ENCODE measurements at regions of chr5 and their contacts with region 1.

Region 1: GRCh38 chr5:178732281-178732680 is 1.8 kb upstream of the ZNF354A start:
- DNase-seq: no peak
- ATAC-seq: no peak
- H3K4me3 ChIP-seq: no peak overlapping the region
- H3K4me3 Mint-ChIP-seq: peak overlapping the region; percentile 8
- H3K27ac ChIP-seq: no peak overlapping the region
- H3K27ac Mint-ChIP-seq: no peak overlapping the region
- H3K4me1 ChIP-seq: peaks cover 4% of the 10 kb centered on the region
- H3K4me1 Mint-ChIP-seq: peaks cover 14% of the 10 kb centered on the region
- H3K27me3 ChIP-seq: no peaks in the 10 kb centered on the region
- H3K27me3 Mint-ChIP-seq: no peaks in the 10 kb centered on the region
- CTCF ChIP-seq: no peak

Region 2: GRCh38 chr5:177412603-177413233 is 1319.6 kb before region 1 on chr5:
- CTCF ChIA-PET with region 1: no interaction called
- POLR2A ChIA-PET with region 1: no interaction called
- intact Hi-C with region 1: no loop called
- DNase-seq: peak in 2 of 9 experiments; percentile 64 to 81
- ATAC-seq: peak; percentile 55
- H3K4me3 ChIP-seq: peak overlapping the region in 1 of 2 experiments; percentile 32
- H3K4me3 Mint-ChIP-seq: peak overlapping the region; percentile 72
- H3K27ac ChIP-seq: peak overlapping the region in 1 of 2 experiments; percentile 75
- H3K27ac Mint-ChIP-seq: peak overlapping the region; percentile 79
- H3K4me1 ChIP-seq: peaks cover 17% of the 10 kb centered on the region
- H3K4me1 Mint-ChIP-seq: peaks cover 37% of the 10 kb centered on the region
- H3K27me3 ChIP-seq: no peaks in the 10 kb centered on the region
- H3K27me3 Mint-ChIP-seq: no peaks in the 10 kb centered on the region
- CTCF ChIP-seq: no peak

Region 3: DNA sequence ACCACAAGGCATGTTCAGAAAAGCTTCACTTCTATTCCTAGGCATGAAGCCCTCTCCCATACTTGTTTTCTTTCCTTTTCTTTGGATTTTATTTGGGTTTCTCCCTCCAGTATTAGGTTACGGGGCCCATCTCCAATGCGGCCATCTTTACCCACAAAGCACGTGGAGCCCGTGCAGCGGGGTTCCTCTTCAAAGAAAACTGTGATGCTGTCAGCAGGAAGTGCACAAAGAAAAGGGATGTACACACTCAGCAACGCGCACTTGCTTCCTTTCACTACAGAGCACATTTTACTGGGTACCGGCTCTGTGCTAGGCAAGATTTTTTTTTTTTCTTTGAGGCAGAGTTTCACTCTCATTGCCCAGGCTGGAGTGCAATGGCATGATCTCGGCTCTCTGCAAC is 248.7 kb before region 1 on chr5:
- CTCF ChIA-PET with region 1: no interaction called
- POLR2A ChIA-PET with region 1: no interaction called
- intact Hi-C with region 1: loop called in 1 of 2 experiments (anchors 5 kb)
- DNase-seq: peak; percentile 13 to 82 (median 56)
- ATAC-seq: peak; percentile 100
- H3K4me3 ChIP-seq: peak overlapping the region in 1 of 2 experiments; percentile 20
- H3K4me3 Mint-ChIP-seq: peak overlapping the region; percentile 76
- H3K27ac ChIP-seq: peak overlapping the region; percentile 36 to 56
- H3K27ac Mint-ChIP-seq: peak overlapping the region; percentile 91
- H3K4me1 ChIP-seq: peaks cover 11% of the 10 kb centered on the region
- H3K4me1 Mint-ChIP-seq: peaks cover 10% of the 10 kb centered on the region
- H3K27me3 ChIP-seq: no peaks in the 10 kb centered on the region
- H3K27me3 Mint-ChIP-seq: no peaks in the 10 kb centered on the region
- CTCF ChIP-seq: no peak

Region 4: DNA sequence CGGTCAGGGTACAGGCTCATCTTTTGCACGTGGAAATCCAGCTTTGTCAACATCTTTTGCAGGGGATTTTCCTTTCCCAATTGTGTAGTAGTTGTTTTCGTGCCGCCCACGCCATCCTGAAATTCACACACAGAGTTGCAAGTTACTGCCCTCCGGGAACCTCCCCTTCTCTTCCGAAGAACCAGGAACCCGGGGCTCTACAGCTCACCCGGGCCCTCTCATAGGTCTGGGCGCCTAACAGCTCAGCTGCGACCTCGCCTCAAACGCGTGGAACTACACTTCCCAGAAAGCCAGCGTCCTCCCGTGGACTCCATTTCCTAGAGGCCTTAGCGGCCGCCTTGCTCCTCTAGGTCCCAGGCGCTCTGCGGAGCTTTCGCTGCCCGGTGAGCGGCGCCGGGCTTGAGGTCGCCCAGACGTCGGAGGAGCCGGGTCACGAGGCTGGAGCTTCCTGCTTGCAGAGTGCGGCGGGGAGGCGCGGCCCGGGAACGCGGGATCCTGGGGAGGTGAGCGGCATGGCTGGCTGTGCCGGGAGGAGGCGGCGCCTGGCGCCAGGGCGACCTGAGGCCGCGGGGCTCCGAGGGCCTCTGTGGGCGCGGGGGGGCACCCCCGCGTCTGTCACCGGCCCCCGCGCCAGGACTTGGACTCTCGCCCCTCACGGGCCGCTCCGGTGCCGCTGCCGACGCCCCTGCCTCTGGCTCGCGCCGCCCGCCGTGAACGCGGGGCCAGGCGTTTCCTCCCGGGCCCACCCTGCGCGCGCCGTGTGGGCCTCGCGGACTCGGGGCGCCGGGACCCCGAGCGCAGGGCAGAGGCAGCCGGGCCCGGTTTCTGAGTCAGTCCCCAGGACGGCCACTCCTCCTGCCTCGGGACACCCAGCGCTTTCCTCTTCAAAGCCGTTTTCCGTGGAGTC is 127.6 kb after region 1 on chr5 and contains the start of gene ZNF354B:
- CTCF ChIA-PET with region 1: interaction called, 11 read pairs
- POLR2A ChIA-PET with region 1: interaction called, 10 read pairs
- intact Hi-C with region 1: loop called (anchors 1 kb)
- DNase-seq: peak; percentile 54 to 93 (median 81)
- ATAC-seq: peak; percentile 96
- H3K4me3 ChIP-seq: peak within 1 kb of the TSS; percentile 60 to 95
- H3K4me3 Mint-ChIP-seq: peak within 1 kb of the TSS; percentile 90
- H3K27ac ChIP-seq: peak within 1 kb of the TSS; percentile 34 to 55
- H3K27ac Mint-ChIP-seq: peak within 1 kb of the TSS; percentile 90
- H3K4me1 ChIP-seq: peaks cover 15% of the 10 kb centered on the region
- H3K4me1 Mint-ChIP-seq: peaks cover 31% of the 10 kb centered on the region
- H3K27me3 ChIP-seq: no peaks in the 10 kb centered on the region
- H3K27me3 Mint-ChIP-seq: no peaks in the 10 kb centered on the region
- CTCF ChIP-seq: no peak
- total RNA-seq, gene ZNF354B: 4.6 to 6.1 TPM

Region 5: DNA sequence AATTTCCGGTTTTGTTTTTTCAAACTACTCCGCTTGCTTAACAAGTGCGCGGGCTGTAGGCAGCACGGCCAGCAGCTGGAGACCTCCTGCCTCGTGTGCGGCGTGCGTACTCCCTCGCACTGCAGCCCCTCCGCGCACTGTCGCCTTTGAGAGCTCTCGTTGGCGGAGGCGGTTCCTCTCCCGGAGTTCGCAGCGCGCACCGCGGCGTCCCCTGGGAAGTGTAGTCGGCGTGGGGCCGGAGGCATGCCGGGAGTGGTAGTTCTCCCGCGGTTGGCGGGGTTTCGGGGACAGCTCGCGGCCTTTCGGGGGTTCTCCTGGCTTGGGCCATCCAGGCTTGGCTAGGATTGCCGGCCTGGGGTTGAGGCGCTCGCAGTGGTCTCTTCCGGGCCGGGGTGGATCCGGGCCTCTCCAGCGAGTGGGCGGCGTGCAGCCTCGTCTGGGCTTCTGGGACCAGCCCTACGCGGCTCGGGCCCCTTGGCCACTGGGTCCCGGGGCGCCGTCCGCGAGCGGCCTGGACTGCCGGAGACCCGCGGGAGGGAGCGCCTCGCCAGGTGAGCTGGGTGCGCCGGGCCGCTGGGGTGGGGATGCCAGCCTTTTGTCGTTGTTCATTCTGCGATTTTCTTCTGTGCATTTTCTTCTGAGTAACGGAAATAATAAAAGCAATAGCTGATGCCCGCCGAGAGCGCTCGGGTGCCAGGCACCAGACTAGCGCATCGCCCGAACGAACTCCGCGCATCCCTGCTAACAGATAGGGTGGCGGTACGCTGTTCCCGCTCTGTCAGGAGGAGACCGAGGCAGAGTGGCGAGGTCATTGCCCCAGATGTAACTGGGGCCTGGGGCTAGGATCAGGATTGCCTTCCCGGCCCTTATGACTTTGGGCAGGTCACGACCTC is 328.1 kb after region 1 on chr5 and contains the start of gene ZNF354C:
- CTCF ChIA-PET with region 1: interaction called, 8 read pairs
- POLR2A ChIA-PET with region 1: interaction called, 11 read pairs
- intact Hi-C with region 1: loop called in 1 of 2 experiments (anchors 1 kb)
- DNase-seq: peak; percentile 64 to 92 (median 88)
- ATAC-seq: peak; percentile 98
- H3K4me3 ChIP-seq: peak within 1 kb of the TSS; percentile 76 to 80
- H3K4me3 Mint-ChIP-seq: peak within 1 kb of the TSS; percentile 95
- H3K27ac ChIP-seq: peak within 1 kb of the TSS; percentile 64 to 76
- H3K27ac Mint-ChIP-seq: peak within 1 kb of the TSS; percentile 92
- H3K4me1 ChIP-seq: peaks cover 15% of the 10 kb centered on the region
- H3K4me1 Mint-ChIP-seq: peaks cover 30% of the 10 kb centered on the region
- H3K27me3 ChIP-seq: no peaks in the 10 kb centered on the region
- H3K27me3 Mint-ChIP-seq: peaks cover 8% of the 10 kb centered on the region
- CTCF ChIP-seq: no peak
- total RNA-seq, gene ZNF354C: 2.4 to 2.7 TPM

Region 6: GRCh38 chr5:179495906-179496455 is 763.7 kb after region 1 on chr5:
- CTCF ChIA-PET with region 1: no interaction called
- POLR2A ChIA-PET with region 1: no interaction called
- intact Hi-C with region 1: loop called in 1 of 2 experiments (anchors 2 kb)
- DNase-seq: no peak
- ATAC-seq: no peak
- H3K4me3 ChIP-seq: no peak overlapping the region
- H3K4me3 Mint-ChIP-seq: no peak overlapping the region
- H3K27ac ChIP-seq: no peak overlapping the region
- H3K27ac Mint-ChIP-seq: no peak overlapping the region
- H3K4me1 ChIP-seq: no peaks in the 10 kb centered on the region
- H3K4me1 Mint-ChIP-seq: no peaks in the 10 kb centered on the region
- H3K27me3 ChIP-seq: no peaks in the 10 kb centered on the region
- H3K27me3 Mint-ChIP-seq: no peaks in the 10 kb centered on the region
- CTCF ChIP-seq: no peak

Measured in CD8-positive, alpha-beta T cell (primary cell).